Activated naive CD4-positive, alpha-beta T cell treated with anti-CD3 and anti-CD28 coated beads for 36 hours (primary cell): ENCODE measurements at regions of chr6 and their contacts with region 1.

Region 1: DNA sequence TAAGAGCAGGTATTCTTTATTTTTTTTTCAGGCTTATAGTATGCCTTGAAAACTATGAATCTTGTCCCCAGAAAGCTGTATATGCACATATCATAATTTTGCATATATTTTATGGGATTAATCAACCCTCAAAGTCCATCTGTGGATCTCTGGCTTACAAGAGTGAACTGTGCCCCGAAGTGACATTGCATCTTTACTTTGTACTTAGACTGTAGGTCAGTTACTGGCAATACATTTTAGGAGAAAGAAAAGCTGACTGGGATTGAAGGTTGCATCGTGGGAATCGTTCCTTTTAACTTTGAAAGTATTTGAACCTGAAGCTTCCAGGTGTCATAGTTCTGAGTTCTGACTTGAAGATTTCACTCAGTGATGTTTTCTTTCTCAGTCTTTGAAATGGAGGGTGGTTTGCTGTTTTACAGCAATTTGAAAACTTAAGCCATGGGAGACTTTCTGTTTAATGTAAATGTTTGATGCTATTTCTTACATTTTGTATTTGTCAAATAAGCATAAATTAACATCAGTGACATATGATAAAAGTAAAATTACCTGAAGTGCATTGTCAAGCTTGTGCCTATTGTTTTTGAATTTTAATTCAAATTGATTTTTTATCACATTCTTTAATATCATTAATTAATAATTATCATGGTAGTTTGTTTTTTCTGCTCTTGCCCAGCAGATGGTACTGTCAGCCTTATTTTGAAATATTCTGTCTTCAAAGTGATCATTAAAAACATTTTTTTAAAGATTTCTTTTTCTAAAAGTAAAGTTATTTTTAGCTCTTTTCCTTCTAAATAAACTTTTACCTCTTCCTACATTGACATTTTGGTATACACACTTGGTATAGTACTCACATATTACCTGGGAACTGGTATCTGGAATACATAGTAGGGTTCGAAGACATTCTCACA is 29.0 kb downstream of the L3MBTL3 start:
- DNase-seq: no peak
- H3K4me3 Mint-ChIP-seq: no peak overlapping the region
- H3K27ac Mint-ChIP-seq: no peak overlapping the region
- H3K4me1 Mint-ChIP-seq: no peaks in the 10 kb centered on the region
- H3K27me3 Mint-ChIP-seq: no peaks in the 10 kb centered on the region

Region 2: DNA sequence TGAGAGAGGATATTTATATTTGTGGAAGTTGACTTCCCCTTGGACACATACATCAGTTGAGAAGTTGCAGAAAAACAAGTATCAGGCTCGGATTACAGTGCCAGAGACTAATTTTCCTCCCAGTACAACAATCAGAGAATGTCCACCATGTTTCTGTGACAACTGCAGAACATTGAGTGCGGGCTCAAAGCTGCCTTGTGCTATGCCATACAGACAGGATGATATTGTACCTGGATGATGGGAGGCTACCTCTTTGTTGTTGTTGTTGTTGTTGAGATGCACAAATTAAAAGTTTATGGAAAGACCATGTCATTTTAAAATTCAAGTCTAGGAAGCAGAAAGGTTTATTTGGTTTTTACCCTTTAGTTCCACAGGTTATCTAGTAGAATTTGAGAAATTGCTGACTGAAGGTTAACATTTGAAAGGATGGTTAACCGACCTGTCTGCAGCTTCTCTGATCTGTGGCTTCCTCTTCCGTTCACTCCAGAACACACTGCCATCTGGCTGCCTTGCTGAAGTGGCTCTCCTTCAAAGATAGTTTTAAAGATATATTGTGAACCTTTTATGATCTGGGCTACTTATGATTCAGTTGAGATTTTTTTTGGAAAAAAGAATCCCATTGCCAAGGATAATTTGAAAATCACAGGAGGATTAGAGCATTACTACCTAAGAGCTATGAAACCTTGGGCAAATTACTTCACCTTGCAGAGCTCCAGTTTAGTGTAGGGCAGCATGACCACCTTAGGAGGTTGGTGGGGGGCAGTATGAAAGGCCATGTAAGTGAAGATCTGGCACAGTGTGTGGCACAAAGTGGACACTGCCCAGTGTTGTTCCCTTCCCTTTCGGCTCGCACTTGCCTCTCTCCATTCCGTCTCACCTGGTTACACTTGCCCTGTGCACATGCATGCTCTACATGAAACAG is 334.4 kb after region 1 on chr6:
- CTCF ChIA-PET with region 1: no interaction called
- intact Hi-C with region 1: loop called (anchors 10 kb)
- DNase-seq: peak; percentile 56
- H3K4me3 Mint-ChIP-seq: no peak overlapping the region
- H3K27ac Mint-ChIP-seq: no peak overlapping the region
- H3K4me1 Mint-ChIP-seq: peaks cover 14% of the 10 kb centered on the region
- H3K27me3 Mint-ChIP-seq: no peaks in the 10 kb centered on the region

Region 3: DNA sequence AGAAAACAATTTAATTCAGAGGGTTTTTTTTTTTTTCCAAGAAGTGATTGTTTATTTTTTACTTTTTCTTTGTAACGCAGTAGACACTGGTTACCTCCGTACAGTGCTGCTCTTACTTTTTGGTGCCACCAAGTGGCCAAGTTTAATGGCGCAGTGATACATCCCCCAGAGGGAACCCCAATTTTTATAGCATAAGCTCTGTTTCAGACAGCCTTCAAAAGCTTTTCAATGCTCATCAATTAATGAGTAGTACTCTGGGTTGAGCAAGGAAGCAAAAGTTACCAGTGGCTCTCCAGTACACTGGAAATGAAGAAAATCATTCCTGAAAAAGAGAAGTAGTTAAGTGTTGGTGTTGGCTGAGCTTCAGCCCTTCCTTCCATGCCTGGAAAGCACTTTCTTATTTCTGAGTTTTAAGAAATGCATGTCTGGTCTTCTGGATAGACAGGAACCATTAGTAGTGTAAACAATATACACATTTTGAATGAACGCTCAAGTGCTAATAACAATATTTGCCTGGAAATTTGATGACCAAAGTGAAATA is 650.7 kb after region 1 on chr6:
- CTCF ChIA-PET with region 1: no interaction called
- intact Hi-C with region 1: loop called (anchors 2 kb)
- DNase-seq: peak; percentile 79
- H3K4me3 Mint-ChIP-seq: no peak overlapping the region
- H3K27ac Mint-ChIP-seq: no peak overlapping the region
- H3K4me1 Mint-ChIP-seq: peaks cover 19% of the 10 kb centered on the region
- H3K27me3 Mint-ChIP-seq: no peaks in the 10 kb centered on the region